Right ventricle myocardium inferior (tissue), 1 donor: ENCODE measurements at regions of chr3 and their contacts with region 1.

Region 1: GRCh38 chr3:118884748-118885206 is 149.9 kb downstream of the IGSF11 start:
- DNase-seq: peak; percentile 83
- ATAC-seq: peak; percentile 76

Region 2: DNA sequence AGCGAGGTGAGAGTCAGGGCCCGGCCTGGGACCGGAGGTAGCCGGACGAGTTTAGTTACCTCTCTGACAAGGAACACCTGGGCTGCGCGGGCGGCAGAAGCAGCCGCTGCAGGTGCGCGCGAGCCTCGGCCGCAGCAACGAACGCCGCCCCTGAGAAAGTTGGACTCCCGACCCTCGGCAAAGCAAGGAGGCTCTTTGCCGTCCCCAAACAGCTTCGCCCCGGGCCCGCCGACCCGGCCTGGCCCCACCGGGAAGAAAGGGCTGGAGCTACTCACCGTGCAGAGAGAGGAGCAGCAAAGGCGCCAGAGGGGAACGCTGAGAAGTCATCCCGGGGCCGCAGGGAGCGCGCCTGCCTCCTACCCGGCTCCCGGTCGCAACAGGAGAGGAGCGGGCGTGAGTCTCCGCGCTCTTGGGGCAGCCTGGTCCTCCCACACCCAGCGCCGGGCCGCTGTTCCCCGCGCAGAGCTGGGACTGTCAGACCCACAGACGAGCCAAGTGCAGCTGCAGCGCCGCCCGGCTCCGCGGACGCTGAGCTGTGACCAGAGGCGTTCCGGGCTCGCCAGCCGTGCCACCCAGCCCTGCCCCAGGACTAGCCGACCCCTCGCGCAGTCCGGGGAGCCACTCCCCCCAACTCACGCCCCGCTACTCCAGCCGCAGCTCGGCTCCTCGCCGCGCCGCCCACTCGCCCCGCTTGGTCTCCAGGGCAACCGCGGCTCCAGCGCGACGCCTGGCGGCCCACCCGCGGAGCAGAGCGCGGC is 149.7 kb after region 1 on chr3 and contains the start of gene IGSF11:
- intact Hi-C with region 1: loop called (anchors 1 kb)
- DNase-seq: peak; percentile 71
- ATAC-seq: peak; percentile 95
- total RNA-seq, gene IGSF11: 3.1 TPM

Region 3: GRCh38 chr3:119098619-119099222 is 213.9 kb after region 1 on chr3:
- intact Hi-C with region 1: loop called (anchors 1 kb)
- DNase-seq: no peak
- ATAC-seq: no peak

Region 4: DNA sequence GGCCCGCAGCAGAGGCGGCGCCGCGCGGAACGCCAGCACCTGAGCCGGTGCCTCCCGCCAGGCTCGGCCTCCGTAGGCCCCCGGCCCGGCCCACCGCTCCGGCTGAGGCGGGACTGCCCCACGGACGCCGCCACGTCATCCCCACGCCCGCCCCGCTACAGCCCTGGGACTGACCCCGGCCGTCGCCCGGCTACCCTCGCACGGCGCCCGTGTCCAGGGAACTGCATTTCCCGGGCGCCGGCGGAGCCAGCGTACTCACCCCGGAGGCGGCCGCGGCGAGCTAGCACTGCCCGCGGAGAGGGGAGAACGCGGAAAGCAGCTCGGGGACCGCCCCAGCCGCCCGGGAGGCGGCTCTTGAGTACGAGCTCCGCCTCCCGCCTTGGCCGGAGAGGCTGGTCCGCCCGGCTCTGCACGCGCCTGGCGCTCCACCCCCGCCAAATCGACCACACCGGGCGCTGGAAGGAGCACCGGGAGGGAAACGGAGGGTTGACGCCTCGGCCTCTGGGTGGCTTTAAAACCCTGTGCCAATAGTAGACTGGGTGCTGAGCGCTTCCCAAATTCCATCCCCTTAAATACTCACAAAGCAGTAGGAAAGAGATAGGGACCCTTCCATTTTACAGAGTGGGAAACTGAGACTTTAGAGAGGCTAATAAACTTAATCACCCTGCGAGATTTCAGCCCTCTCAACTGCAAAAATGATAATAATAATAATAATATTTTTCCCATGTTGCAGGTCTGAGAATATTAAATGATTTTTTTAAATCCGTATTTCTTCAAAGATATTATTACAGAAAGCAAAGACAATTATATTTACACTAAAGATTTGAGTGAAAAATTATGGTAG is 356.0 kb after region 1 on chr3 and contains the start of gene B4GALT4:
- intact Hi-C with region 1: loop called (anchors 10 kb)
- DNase-seq: peak; percentile 96
- ATAC-seq: peak; percentile 97
- total RNA-seq, gene B4GALT4: 12.0 TPM

Region 5: DNA sequence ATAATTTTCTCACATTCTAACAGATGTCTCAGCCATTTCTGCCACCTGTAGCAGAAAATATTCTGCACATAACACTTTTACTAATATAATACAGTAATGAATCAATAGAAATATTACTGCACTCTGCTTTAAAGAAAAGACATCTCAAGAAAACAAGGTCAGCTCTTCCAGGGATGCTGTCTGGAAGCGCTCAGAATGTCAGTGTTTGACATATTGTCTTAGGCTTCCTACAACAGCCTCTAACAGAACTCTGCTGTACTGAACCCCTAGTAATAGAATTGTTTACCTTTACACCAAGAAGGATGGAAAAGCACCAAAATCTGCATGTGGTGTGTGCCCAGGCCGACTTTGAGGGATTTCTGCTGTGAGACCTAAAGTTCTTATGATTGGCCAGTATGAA is 1627.9 kb after region 1 on chr3:
- intact Hi-C with region 1: loop called (anchors 5 kb)
- DNase-seq: no peak
- ATAC-seq: no peak